A549 (cell line): ENCODE measurements at regions of chr3 and their contacts with region 1.

Region 1: DNA sequence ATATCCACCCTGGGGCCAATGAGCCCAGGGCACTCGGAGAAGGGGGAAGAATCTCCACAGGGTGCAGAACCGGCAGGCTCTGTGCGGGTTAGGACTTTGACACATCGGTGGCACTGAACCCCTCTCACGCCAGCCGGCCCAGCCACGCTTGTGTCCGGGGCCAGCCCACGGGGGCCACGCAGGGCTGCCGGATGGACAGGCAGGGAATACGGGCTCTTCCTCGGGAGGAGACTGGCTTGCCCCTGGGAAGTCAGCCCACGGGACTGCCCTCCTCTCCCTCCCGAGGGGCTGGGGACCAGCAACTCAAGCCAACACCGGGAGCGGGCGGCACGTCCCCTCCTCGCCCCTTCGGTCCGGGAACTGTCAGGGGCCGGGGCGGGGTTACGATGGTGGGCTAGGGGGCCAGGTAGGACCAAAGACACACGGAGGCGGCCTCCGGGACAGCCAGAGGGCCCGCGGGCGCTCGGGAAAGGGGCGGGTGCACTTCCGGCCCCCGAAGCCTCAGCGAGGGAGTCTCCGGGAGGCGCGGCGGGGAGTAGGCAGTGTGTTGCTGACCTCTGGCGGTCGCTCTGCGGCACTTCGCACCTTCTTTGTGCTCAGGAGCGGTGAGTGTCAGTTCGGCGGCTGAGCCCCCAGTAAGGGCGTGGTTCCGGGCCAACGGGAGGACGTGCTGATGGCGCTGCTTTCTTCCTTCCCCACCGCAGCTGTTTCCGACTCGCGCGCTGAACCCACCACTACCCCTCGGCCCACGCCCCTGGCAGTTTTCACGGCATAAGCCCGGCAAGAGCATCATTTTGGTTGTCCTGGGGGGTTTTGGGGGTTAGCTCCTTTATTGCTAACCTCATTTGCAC is 5.1 kb upstream of the CYP8B1 start:
- DNase-seq: peak; percentile 72 to 74
- ATAC-seq: peak; percentile 99 to 100
- H3K4me3 ChIP-seq: peak overlapping the region; percentile 68
- H3K27ac ChIP-seq: peak overlapping the region; percentile 77 to 96
- H3K4me1 ChIP-seq: no peaks in the 10 kb centered on the region
- CTCF ChIP-seq: peak; percentile 67
- EP300 ChIP-seq: no peak
- POLR2A ChIP-seq: peak; percentile 25; the same call in 1 of the 2 replicates
- RAD21 ChIP-seq: peak; percentile 77 to 83

Region 2: DNA sequence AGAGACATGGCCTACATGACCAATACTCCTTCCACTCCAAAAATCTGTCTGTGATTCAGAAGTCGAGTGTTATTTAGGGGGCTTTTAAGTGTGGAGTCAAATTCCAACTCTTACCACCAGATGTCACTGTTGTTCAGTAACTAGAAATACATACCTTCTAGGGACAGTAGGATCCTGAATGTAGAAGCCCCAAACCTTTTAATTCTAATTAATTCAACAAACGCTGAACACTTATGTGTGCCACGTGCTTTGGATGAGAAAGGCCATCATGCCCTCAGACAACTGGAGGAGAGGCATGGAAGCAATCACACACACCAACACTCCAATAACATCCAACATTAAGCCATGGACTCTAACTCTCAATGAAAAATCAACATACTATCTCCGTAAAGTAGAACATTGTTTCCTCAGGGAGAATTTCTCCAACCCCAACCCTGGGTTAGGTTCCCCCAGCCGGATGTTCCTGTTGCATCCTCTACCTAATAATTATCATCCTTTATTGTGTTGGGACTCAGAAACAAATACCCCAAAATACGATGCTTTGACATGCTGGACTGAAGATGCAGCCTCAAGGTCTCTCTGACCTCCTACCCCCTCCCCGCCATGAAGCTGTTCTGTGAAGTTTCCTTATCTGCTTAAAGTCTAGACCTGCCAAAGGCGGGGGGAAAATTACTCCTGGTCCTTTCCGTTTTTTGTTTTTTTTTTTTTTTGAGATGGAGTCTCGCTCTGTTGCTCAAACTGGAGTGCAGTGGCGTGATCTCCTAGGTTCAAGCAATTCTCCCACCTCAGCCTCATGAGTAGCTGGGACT is 99.7 kb before region 1 on chr3:
- CTCF ChIA-PET with region 1: interaction called, 14 read pairs
- POLR2A ChIA-PET with region 1: no interaction called
- DNase-seq: peak; percentile 64 to 67
- ATAC-seq: peak; percentile 78 to 91; a peak in 5 of 6 replicates
- H3K4me3 ChIP-seq: no peak overlapping the region
- H3K27ac ChIP-seq: no peak overlapping the region
- H3K4me1 ChIP-seq: no peaks in the 10 kb centered on the region
- CTCF ChIP-seq: peak; percentile 65
- EP300 ChIP-seq: no peak
- POLR2A ChIP-seq: no peak
- RAD21 ChIP-seq: peak; percentile 53 to 56

Region 3: DNA sequence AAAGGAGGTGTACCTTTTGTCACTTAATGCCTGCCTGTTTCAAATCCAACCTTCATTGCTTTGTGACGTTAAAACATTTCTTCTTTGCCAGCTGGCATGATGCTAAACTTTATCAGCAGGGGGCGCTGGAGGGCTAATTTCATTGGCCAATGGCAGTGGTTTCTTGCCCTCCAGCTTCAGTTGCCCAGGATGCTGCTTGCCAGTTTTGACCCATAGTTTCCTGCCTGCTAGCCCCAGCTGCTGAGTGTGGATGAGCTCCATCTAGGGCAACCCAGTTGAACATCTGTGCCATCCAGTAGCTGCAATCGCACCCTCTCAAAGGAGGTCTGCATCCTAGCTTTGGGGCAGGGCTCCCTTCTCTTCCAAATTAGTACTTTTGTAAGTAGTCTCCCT is 49.5 kb before region 1 on chr3:
- CTCF ChIA-PET with region 1: no interaction called
- POLR2A ChIA-PET with region 1: no interaction called
- DNase-seq: peak; percentile 18 to 57
- ATAC-seq: peak; percentile 39 to 86; a peak in 4 of 6 replicates
- H3K4me3 ChIP-seq: no peak overlapping the region
- H3K27ac ChIP-seq: no peak overlapping the region
- H3K4me1 ChIP-seq: 0 out of 3 replicates have a peak, but pooled peaks cover 3% of the 10 kb centered on the region
- CTCF ChIP-seq: peak; percentile 42
- EP300 ChIP-seq: no peak
- POLR2A ChIP-seq: no peak
- RAD21 ChIP-seq: peak; percentile 33 to 50

Region 4: DNA sequence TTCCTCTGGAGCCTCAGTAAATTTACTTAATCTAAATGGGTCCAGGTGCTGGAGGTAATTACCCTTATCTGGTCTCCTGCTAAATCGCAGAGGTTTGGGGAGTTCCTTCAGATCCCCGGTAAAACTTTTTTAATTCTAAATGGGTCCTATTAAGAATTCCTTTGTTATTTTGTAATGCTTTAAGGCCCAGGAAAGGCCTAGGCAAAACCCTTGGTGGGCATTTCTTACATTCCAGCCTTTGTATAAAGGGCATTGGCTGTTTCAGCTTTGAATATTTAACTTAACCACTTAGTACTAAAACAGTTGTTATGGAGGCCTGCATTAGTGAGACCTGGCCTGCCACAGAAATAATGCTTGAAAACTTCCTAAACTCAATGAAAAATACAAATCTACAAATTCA is 10.2 kb after region 1 on chr3:
- CTCF ChIA-PET with region 1: interaction called, 11 read pairs
- POLR2A ChIA-PET with region 1: no interaction called
- DNase-seq: no peak
- ATAC-seq: no peak
- H3K4me3 ChIP-seq: no peak overlapping the region
- H3K27ac ChIP-seq: no peak overlapping the region
- H3K4me1 ChIP-seq: no peaks in the 10 kb centered on the region
- CTCF ChIP-seq: no peak
- EP300 ChIP-seq: no peak
- POLR2A ChIP-seq: no peak
- RAD21 ChIP-seq: no peak